ENCODE measurements at regions of chr6 and their contacts with region 1.

Region 1: DNA sequence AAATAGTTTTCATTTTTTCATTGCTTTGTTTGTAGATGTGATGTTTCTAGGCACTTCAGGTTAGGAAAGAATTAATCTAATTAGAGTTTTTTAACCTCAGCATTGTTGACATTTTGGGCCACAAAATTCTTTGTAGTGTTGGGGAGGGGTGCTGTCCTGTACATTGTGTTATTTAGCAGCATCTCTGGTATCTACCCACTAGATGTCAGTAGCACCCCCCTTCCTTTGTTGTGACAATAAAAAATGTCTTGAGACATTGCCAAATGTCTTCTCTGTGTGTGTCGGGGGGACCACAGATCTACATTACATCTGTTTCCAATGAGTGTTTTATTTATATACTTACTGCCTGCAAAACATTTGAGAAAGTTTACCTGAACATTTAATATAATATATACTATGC is 45.6 kb downstream of the EYA4 start:
- DNase-seq: no peak

Region 2: GRCh38 chr6:133418108-133418507 is 131.3 kb after region 1 on chr6:
- intact Hi-C with region 1: no loop called
- DNase-seq: no peak

Region 3: GRCh38 chr6:133504761-133505160 is 218.0 kb after region 1 on chr6:
- intact Hi-C with region 1: loop called (anchors 5 kb)
- DNase-seq: no peak

Region 4: GRCh38 chr6:133595111-133595761 is 308.5 kb after region 1 on chr6:
- intact Hi-C with region 1: no loop called
- DNase-seq: peak in 1 of 10 donors; percentile 50

Measured in posterior cingulate gyrus (tissue), 11 donors.